ENCODE measurements at regions of chr16 and their contacts with region 1.

Region 1: DNA sequence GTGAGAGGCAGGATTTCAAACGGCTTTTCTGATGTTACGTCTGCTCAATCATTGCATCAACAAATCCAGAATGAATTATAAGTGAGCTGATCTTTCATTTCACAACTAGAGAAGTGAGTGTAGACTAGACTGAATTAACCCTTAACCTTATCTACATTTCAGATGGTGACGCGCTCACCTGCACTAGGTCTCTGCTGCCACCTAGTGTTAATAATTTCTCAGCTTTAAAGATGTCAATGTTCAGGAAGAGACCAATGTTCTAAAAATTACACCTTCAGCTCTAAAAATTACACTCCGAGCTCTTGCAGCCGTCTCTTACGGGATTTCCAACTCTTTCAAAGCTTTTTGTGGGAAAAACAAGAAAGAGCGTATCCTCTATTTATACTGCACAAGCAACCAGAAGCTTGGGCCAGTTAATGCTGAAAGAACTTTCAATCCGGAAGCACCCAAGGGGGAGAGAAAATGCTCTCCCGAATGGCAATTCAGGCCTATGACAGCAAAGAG is 88.2 kb upstream of the FA2H start:
- DNase-seq: no peak
- H3K4me3 ChIP-seq: no peak overlapping the region
- H3K27ac ChIP-seq: no peak overlapping the region
- H3K4me1 ChIP-seq: no peaks in the 10 kb centered on the region
- H3K27me3 ChIP-seq: no peaks in the 10 kb centered on the region
- CTCF ChIP-seq: peak; percentile 53 to 87 (median 84)
- POLR2A ChIP-seq: no peak

Region 2: DNA sequence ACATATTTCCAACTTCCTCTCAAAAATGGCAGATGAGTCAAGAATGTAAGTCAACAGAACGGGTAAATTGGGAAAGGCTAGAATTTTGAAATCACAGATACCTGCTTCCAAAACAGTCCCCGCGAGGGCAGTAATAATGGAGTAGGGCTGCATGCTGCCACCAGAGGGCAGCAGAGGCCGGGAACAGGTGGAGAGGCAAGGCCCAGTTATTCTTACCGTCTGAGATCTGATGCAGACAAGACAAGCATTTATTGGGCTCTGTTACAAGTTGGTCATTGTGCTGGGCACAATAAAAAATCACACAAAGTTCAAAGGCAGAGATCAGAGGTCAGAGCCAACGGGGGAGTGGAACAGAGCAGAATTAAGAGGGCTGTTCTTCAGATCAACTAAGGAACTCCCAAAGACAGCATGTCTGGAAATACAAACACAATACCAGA is 153.3 kb before region 1 on chr16:
- intact Hi-C with region 1: loop called (anchors 1 kb)
- DNase-seq: peak; percentile 69 to 76
- H3K4me3 ChIP-seq: no peak overlapping the region
- H3K27ac ChIP-seq: no peak overlapping the region
- H3K4me1 ChIP-seq: no peaks in the 10 kb centered on the region
- H3K27me3 ChIP-seq: no peaks in the 10 kb centered on the region
- CTCF ChIP-seq: peak; percentile 93 to 95 (median 94)
- POLR2A ChIP-seq: no peak

Region 3: GRCh38 chr16:75566040-75566810 is 703.4 kb after region 1 on chr16 and contains the start of gene GABARAPL2:
- intact Hi-C with region 1: no loop called
- DNase-seq: peak; percentile 67 to 75
- H3K4me3 ChIP-seq: peak within 1 kb of the TSS; percentile 78 to 98 (median 95)
- H3K27ac ChIP-seq: peak within 1 kb of the TSS; percentile 73 to 84
- H3K4me1 ChIP-seq: peaks cover 0 to 11% of the 10 kb centered on the region in 2 donors
- H3K27me3 ChIP-seq: no peaks in the 10 kb centered on the region
- CTCF ChIP-seq: no peak
- POLR2A ChIP-seq: peak; percentile 87
- total RNA-seq, gene GABARAPL2: 95.2 to 128 (median 104) TPM